ENCODE measurements at regions of chr2 and their contacts with region 1.

Region 1: GRCh38 chr2:130332271-130333073 is 10.2 kb upstream of the IMP4 start:
- DNase-seq: peak; percentile 77
- H3K4me3 Mint-ChIP-seq: no peak overlapping the region
- H3K27ac Mint-ChIP-seq: no peak overlapping the region
- H3K4me1 Mint-ChIP-seq: peaks cover 3% of the 10 kb centered on the region
- H3K27me3 Mint-ChIP-seq: peaks cover 17% of the 10 kb centered on the region

Region 2: GRCh38 chr2:129923265-129924091 is 409.0 kb before region 1 on chr2:
- CTCF ChIA-PET with region 1: interaction called, 3 read pairs
- intact Hi-C with region 1: loop called (anchors 10 kb)
- DNase-seq: peak; percentile 25
- H3K4me3 Mint-ChIP-seq: no peak overlapping the region
- H3K27ac Mint-ChIP-seq: no peak overlapping the region
- H3K4me1 Mint-ChIP-seq: peaks cover 3% of the 10 kb centered on the region
- H3K27me3 Mint-ChIP-seq: peaks cover 18% of the 10 kb centered on the region

Region 3: GRCh38 chr2:130150181-130151144 is 182.0 kb before region 1 on chr2:
- CTCF ChIA-PET with region 1: interaction called, 4 read pairs
- intact Hi-C with region 1: loop called (anchors 10 kb)
- DNase-seq: no peak
- H3K4me3 Mint-ChIP-seq: no peak overlapping the region
- H3K27ac Mint-ChIP-seq: no peak overlapping the region
- H3K4me1 Mint-ChIP-seq: no peaks in the 10 kb centered on the region
- H3K27me3 Mint-ChIP-seq: peaks cover 5% of the 10 kb centered on the region

Region 4: GRCh38 chr2:130181325-130181879 is 151.1 kb before region 1 on chr2 and contains the start of gene SMPD4:
- CTCF ChIA-PET with region 1: no interaction called
- intact Hi-C with region 1: loop called (anchors 1 kb)
- DNase-seq: peak; percentile 97
- H3K4me3 Mint-ChIP-seq: peak within 1 kb of the TSS; percentile 91
- H3K27ac Mint-ChIP-seq: peak within 1 kb of the TSS; percentile 94
- H3K4me1 Mint-ChIP-seq: peaks cover 31% of the 10 kb centered on the region
- H3K27me3 Mint-ChIP-seq: no peaks in the 10 kb centered on the region
- total RNA-seq, gene SMPD4: 70.8 to 71.5 TPM

Region 5: GRCh38 chr2:131030478-131030971 is 698.1 kb after region 1 on chr2:
- CTCF ChIA-PET with region 1: no interaction called
- intact Hi-C with region 1: no loop called
- DNase-seq: no peak
- H3K4me3 Mint-ChIP-seq: no peak overlapping the region
- H3K27ac Mint-ChIP-seq: no peak overlapping the region
- H3K4me1 Mint-ChIP-seq: peaks cover 6% of the 10 kb centered on the region
- H3K27me3 Mint-ChIP-seq: peaks cover 21% of the 10 kb centered on the region